ENCODE measurements at regions of chr11 and their contacts with region 1.

Region 1: DNA sequence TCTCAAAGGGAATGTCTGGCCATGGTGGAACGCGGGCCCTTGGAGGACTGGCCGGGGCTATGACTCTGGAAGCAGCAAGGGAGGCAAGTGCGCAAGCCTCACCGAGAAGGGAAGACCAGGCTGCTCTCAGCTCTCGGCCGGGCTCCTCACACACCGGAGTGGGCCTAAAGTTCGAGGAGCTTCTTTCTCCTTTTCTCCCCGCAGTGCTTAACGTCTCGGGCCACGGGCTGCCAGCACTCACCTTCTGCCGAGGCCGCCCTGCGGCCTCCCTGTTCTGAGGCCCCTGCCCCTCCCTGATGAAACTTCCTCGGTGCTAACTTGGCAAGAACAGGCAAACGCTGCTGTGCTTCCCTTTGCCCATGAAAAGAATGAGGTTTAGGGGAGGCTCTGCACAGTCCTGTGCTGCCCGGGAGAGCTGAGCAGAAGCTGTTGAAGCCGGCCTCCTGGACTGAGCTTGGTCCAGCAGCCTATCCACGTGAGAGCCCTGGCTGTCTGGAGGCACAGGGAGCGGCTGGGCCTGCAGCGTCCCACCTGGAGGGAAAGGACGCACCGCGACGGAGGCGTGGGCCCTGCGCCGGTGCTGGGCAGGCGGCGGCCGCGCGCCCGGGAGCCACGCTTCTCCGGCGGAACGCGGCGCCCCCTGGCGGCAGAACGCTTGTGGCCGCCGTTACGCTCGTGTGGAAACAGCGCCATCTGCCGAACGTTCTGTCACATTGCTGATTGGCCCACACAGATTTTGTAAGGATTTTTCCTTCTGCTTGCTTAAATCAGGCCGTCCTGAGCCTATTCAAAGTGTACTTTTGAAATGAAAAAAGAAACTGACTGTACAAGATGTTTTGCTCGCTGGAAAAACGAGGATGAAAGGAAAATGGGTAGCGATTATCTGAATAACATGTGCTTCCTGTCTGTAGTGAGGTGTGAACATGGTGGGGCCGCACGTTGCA is 65.0 kb upstream of the TMEM45B start:
- DNase-seq: peak; percentile 55
- H3K4me3 ChIP-seq: peak overlapping the region in 1 of 3 experiments; percentile 34
- H3K27ac ChIP-seq: no peak overlapping the region
- H3K4me1 ChIP-seq: peaks cover 4% of the 10 kb centered on the region
- H3K27me3 ChIP-seq: peaks cover 18% of the 10 kb centered on the region
- CTCF ChIP-seq: peak; percentile 82 to 90

Region 2: GRCh38 chr11:129230006-129230405 is 520.6 kb before region 1 on chr11:
- CTCF ChIA-PET with region 1: no interaction called
- dilution Hi-C with region 1: no loop called
- in situ Hi-C with region 1: no loop called
- intact Hi-C with region 1: loop called (anchors 5 kb)
- DNase-seq: no peak
- H3K4me3 ChIP-seq: no peak overlapping the region
- H3K27ac ChIP-seq: no peak overlapping the region
- H3K4me1 ChIP-seq: peaks cover 7% of the 10 kb centered on the region
- H3K27me3 ChIP-seq: no peaks in the 10 kb centered on the region
- CTCF ChIP-seq: no peak

Region 3: GRCh38 chr11:129364143-129364654 is 386.4 kb before region 1 on chr11:
- CTCF ChIA-PET with region 1: no interaction called
- dilution Hi-C with region 1: no loop called
- in situ Hi-C with region 1: loop called (anchors 5 kb)
- intact Hi-C with region 1: loop called (anchors 1 kb)
- DNase-seq: peak; percentile 82
- H3K4me3 ChIP-seq: no peak overlapping the region
- H3K27ac ChIP-seq: no peak overlapping the region
- H3K4me1 ChIP-seq: peaks cover 4% of the 10 kb centered on the region
- H3K27me3 ChIP-seq: peaks cover 21% of the 10 kb centered on the region
- CTCF ChIP-seq: peak; percentile 100

Region 4: GRCh38 chr11:129410395-129410960 is 340.1 kb before region 1 on chr11:
- CTCF ChIA-PET with region 1: interaction called, 3 read pairs
- dilution Hi-C with region 1: no loop called
- in situ Hi-C with region 1: no loop called
- intact Hi-C with region 1: loop called (anchors 1 kb)
- DNase-seq: peak; percentile 27
- H3K4me3 ChIP-seq: no peak overlapping the region
- H3K27ac ChIP-seq: no peak overlapping the region
- H3K4me1 ChIP-seq: no peaks in the 10 kb centered on the region
- H3K27me3 ChIP-seq: peaks cover 9% of the 10 kb centered on the region
- CTCF ChIP-seq: peak in 1 of 2 donors; percentile 53

Region 5: DNA sequence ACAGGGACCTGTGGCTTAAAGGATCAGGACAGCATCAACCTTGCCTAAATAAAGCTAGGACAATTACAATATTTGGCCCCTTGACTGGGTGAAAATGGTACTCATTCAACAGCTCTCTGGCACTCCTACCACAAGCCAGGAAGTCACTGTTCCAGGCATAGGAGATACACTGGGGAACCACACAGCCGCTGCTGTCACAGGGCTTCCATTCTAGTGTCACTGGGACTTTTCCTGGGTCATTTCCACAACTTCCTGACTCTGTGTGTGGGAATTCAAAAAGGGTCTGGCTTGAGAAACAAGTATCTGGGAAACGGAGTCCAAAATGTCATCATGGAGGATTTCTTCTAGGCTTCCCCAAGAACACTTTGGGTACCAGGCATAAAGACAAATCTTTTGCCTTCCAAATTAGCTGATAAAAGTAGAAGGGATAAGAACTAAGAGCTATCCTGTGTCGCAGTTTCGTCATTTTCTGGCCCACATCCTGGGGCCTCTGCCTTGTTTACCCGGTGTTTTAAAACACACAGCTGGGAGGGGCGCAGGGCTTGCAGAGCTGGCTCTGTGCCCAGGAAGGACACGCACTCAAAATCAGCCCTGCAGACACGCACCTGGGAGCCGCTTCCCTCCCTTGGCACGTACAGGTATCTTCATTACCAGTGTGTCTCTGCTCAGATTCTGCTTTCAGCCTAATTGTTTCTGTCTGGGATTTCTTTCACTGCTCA is 103.1 kb after region 1 on chr11:
- CTCF ChIA-PET with region 1: no interaction called
- dilution Hi-C with region 1: no loop called
- in situ Hi-C with region 1: no loop called
- intact Hi-C with region 1: no loop called
- DNase-seq: peak; percentile 79
- H3K4me3 ChIP-seq: no peak overlapping the region
- H3K27ac ChIP-seq: no peak overlapping the region
- H3K4me1 ChIP-seq: peaks cover 17% of the 10 kb centered on the region
- H3K27me3 ChIP-seq: no peaks in the 10 kb centered on the region
- CTCF ChIP-seq: no peak

Region 6: GRCh38 chr11:130022798-130023583 is 272.4 kb after region 1 on chr11:
- CTCF ChIA-PET with region 1: no interaction called
- dilution Hi-C with region 1: no loop called
- in situ Hi-C with region 1: no loop called
- intact Hi-C with region 1: no loop called
- DNase-seq: peak; percentile 74
- H3K4me3 ChIP-seq: no peak overlapping the region
- H3K27ac ChIP-seq: peak overlapping the region; percentile 18
- H3K4me1 ChIP-seq: peaks cover 18% of the 10 kb centered on the region
- H3K27me3 ChIP-seq: no peaks in the 10 kb centered on the region
- CTCF ChIP-seq: no peak

Region 7: GRCh38 chr11:130037058-130037457 is 286.4 kb after region 1 on chr11:
- CTCF ChIA-PET with region 1: no interaction called
- dilution Hi-C with region 1: no loop called
- in situ Hi-C with region 1: no loop called
- intact Hi-C with region 1: no loop called
- DNase-seq: peak; percentile 93
- H3K4me3 ChIP-seq: no peak overlapping the region
- H3K27ac ChIP-seq: peak overlapping the region; percentile 78
- H3K4me1 ChIP-seq: peaks cover 25% of the 10 kb centered on the region
- H3K27me3 ChIP-seq: no peaks in the 10 kb centered on the region
- CTCF ChIP-seq: no peak